ENCODE measurements at regions of chr15 and their contacts with region 1.

Region 1: GRCh38 chr15:82680200-82681102 is 29.2 kb downstream of the AP3B2 start:
- DNase-seq: peak; percentile 59
- ATAC-seq: peak; percentile 93
- H3K4me3 Mint-ChIP-seq: peak overlapping the region; percentile 87
- H3K27ac Mint-ChIP-seq: peak overlapping the region; percentile 82
- H3K4me1 Mint-ChIP-seq: peaks cover 12% of the 10 kb centered on the region
- H3K27me3 Mint-ChIP-seq: peaks cover 11% of the 10 kb centered on the region
- CTCF ChIP-seq: no peak

Region 2: DNA sequence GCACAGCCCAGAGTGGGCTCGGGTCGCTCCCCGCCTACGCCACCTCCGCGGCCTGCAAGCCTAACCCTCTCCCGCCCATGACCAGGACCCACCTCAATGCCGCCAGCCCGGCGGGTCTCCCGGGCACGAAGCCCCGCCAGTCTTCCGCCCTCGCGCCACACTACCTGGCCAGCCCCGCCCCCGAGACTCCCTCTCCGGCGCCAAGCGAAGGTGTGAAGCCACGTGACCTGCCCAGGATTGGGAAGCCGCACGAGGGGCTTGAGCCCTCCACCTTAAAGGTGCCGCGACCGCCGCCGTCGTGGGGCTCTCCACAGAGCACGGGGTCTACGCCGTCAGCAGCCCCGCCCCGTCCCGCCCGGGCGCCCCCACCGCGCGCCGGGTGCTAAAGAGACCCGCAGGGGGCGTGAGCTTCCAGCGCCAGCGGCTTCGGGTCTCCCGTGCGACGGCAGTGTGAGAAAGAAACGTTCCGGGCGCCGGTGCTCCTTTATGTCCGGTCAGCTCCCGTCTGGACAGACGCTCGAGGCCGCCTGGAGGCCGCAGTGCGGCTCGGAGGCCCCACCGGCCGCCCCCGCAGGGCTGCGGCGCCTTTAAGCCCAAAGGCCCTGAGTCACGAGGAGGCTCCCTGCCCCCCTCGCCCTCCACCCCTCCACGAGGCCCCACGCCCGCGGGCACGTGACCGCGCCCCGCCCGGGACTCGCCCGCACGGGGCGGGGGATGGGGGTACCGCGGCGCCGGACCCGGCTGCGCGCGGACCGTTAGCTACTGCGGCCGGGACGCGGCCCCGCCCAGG is 33.2 kb before region 1 on chr15 and contains the start of gene CPEB1:
- CTCF ChIA-PET with region 1: no interaction called
- POLR2A ChIA-PET with region 1: no interaction called
- intact Hi-C with region 1: no loop called
- DNase-seq: peak; percentile 24
- ATAC-seq: peak; percentile 57
- H3K4me3 Mint-ChIP-seq: peak within 1 kb of the TSS; percentile 54
- H3K27ac Mint-ChIP-seq: no peak within 1 kb of the TSS
- H3K4me1 Mint-ChIP-seq: peaks cover 5% of the 10 kb centered on the region
- H3K27me3 Mint-ChIP-seq: peaks cover 55% of the 10 kb centered on the region
- CTCF ChIP-seq: no peak
- total RNA-seq, gene CPEB1: not detected in 2 replicates

Region 3: GRCh38 chr15:82692171-82692570 is 11.7 kb after region 1 on chr15:
- CTCF ChIA-PET with region 1: no interaction called
- POLR2A ChIA-PET with region 1: no interaction called
- intact Hi-C with region 1: no loop called
- DNase-seq: no peak
- ATAC-seq: no peak
- H3K4me3 Mint-ChIP-seq: no peak overlapping the region
- H3K27ac Mint-ChIP-seq: no peak overlapping the region
- H3K4me1 Mint-ChIP-seq: no peaks in the 10 kb centered on the region
- H3K27me3 Mint-ChIP-seq: peaks cover 2% of the 10 kb centered on the region
- CTCF ChIP-seq: no peak

Region 4: GRCh38 chr15:82709421-82710207 is 29.2 kb after region 1 on chr15 and contains the start of gene AP3B2:
- CTCF ChIA-PET with region 1: no interaction called
- POLR2A ChIA-PET with region 1: no interaction called
- intact Hi-C with region 1: loop called (anchors 2 kb)
- DNase-seq: peak; percentile 67
- ATAC-seq: peak; percentile 93
- H3K4me3 Mint-ChIP-seq: peak within 1 kb of the TSS; percentile 77
- H3K27ac Mint-ChIP-seq: no peak within 1 kb of the TSS
- H3K4me1 Mint-ChIP-seq: no peaks in the 10 kb centered on the region
- H3K27me3 Mint-ChIP-seq: peaks cover 29% of the 10 kb centered on the region
- CTCF ChIP-seq: no peak
- total RNA-seq, gene AP3B2: 0.22 and 0.46 TPM in 2 replicates

Region 5: GRCh38 chr15:82749951-82750830 is 69.7 kb after region 1 on chr15:
- CTCF ChIA-PET with region 1: no interaction called
- POLR2A ChIA-PET with region 1: interaction called, 5 read pairs
- intact Hi-C with region 1: loop called (anchors 2 kb)
- DNase-seq: peak; percentile 76
- ATAC-seq: peak; percentile 95
- H3K4me3 Mint-ChIP-seq: peak overlapping the region; percentile 100
- H3K27ac Mint-ChIP-seq: peak overlapping the region; percentile 94
- H3K4me1 Mint-ChIP-seq: peaks cover 44% of the 10 kb centered on the region
- H3K27me3 Mint-ChIP-seq: no peaks in the 10 kb centered on the region
- CTCF ChIP-seq: no peak